SK-N-SH (cell line): ENCODE measurements at regions of chr7 and their contacts with region 1.

Region 1: DNA sequence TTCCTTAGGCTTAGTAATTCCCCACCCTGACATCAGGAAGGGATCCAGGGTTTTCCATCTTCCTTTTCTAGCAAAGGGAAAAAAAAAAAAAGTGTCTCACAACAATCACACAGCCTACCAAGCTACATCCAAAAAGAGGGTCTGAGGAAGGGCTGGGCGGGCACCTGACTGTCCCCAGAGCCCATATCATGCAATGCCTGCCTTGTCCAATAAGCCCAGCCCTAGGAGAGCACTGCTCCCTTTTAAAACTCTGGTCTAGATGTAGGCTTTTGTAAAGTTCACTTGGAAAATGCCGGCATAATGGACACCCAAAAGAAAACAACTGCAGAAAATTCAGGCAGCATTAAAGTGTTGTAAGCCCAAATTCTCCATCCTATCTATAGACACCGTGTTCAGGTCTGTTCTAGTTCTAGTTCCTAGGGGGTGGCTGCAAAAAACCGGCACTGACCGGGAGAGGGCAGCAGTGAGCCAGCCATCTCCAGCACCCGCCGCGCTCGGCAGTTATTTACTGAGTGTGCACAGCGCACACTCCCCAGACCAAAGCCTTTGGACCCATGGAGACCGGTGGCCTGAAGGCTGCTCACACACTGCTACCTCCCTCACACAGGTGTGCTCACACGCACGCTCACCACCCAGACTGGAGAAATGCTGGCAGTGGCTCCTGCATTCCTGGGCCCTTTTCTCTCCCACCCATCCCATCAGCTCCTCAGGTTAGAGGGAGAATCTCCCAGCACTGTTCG is 48.7 kb downstream of the PODXL start:
- DNase-seq: peak; percentile 88
- H3K4me3 ChIP-seq: no peak overlapping the region
- H3K27ac ChIP-seq: peak overlapping the region in 1 of 2 experiments; percentile 29; a peak in 2 of 4 replicates
- H3K4me1 ChIP-seq: peaks cover 9 to 20% of the 10 kb centered on the region in 2 experiments; a peak in 3 of 4 replicates
- H3K27me3 ChIP-seq: no peaks in the 10 kb centered on the region
- CTCF ChIP-seq: peak; percentile 100
- EP300 ChIP-seq: no peak
- RAD21 ChIP-seq: peak; percentile 95

Region 2: DNA sequence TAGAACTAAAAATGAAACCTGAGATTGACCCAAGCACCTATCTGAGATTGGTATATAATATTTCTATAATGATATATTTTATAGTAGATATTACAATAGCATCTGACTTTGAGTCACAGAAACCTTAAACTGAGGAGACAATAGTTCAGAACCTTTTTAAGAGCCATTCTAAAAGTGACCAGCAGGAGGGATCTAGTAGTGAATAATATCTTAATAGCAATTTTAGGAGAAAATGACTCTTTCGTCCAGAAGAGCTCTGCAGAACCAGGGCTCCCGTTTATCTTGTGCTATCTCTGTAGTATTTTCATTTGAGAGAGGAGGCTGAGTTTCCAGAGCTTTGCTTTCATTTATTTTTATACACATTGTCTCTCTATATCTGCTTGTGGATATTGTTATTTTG is 19.4 kb before region 1 on chr7:
- CTCF ChIA-PET with region 1: interaction called, 91 read pairs
- POLR2A ChIA-PET with region 1: interaction called, 5 read pairs
- DNase-seq: no peak
- H3K4me3 ChIP-seq: no peak overlapping the region
- H3K27ac ChIP-seq: peak overlapping the region in 1 of 2 experiments; percentile 2; a peak in 1 of 4 replicates
- H3K4me1 ChIP-seq: peaks cover 0 to 10% of the 10 kb centered on the region in 2 experiments; a peak in 2 of 4 replicates
- H3K27me3 ChIP-seq: no peaks in the 10 kb centered on the region
- CTCF ChIP-seq: peak; percentile 61
- EP300 ChIP-seq: no peak
- RAD21 ChIP-seq: no peak

Region 3: DNA sequence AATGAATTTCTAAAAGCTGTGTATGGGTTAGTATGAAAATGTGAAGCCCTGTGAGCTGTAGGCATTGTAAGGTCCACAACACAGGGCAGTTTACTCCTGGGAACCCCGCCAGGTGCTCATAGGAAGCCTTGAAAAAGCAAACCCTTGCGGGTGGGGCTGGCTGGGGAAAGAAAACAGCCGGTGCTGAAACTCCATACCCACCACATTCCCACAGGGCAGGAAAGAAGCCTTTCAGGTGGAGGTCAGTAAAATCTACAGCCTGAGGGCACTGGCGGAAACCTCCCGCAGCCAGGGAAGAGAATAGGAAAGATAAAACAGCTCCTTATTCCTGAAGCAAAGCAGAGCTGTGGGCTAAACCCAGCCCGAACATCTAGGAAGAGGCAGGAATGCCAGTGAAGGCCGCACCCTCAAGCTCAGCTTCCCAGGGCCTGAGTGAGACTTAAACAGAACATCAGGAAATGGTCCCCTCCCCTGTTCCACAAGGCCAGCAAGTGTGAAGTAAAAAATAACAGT is 13.9 kb after region 1 on chr7:
- CTCF ChIA-PET with region 1: interaction called, 15 read pairs
- POLR2A ChIA-PET with region 1: no interaction called
- DNase-seq: no peak
- H3K4me3 ChIP-seq: no peak overlapping the region
- H3K27ac ChIP-seq: peak overlapping the region in 1 of 2 experiments; percentile 22; a peak in 2 of 4 replicates
- H3K4me1 ChIP-seq: peaks cover 0 to 2% of the 10 kb centered on the region in 2 experiments; a peak in 1 of 4 replicates
- H3K27me3 ChIP-seq: no peaks in the 10 kb centered on the region
- CTCF ChIP-seq: no peak
- EP300 ChIP-seq: no peak
- RAD21 ChIP-seq: no peak

Region 4: DNA sequence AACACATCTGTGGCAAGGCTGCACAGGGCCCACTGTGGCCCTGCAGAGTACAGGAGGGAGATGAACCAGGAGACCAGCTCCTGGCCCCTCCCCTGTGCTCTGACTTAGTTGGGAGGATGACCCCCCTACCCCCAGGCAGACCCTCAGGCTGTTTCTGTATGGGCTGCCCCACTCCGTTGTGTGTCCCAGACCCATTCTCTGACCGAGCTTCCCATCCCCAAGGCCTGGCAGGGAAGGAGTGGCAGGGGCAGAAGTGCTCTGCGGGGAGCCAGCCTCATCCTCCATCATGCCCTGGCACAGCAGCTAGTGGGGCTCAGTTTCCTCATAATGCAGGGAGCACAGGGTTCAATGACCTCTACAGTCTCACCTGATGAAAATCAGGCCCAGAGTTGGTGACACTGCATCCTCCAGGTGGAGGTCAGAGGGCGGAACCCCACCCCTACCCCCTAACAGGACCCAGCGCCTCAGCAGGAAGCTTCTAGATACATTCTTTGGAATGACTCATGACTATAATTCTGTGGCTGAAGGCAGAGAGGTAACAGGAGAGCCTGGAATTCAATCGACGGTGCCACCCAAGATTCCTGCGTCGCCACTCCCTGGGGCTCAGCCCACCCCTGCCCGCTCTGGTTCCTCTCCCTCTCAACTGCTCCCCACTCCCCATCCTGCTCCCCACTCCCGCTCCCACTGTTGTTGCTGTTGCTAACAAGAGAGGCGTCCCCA is 30.5 kb after region 1 on chr7:
- CTCF ChIA-PET with region 1: interaction called, 95 read pairs
- POLR2A ChIA-PET with region 1: no interaction called
- DNase-seq: no peak
- H3K4me3 ChIP-seq: no peak overlapping the region
- H3K27ac ChIP-seq: peak overlapping the region; percentile 64 to 76
- H3K4me1 ChIP-seq: peaks cover 27 to 34% of the 10 kb centered on the region in 2 experiments; a peak in 3 of 4 replicates
- H3K27me3 ChIP-seq: no peaks in the 10 kb centered on the region
- CTCF ChIP-seq: no peak
- EP300 ChIP-seq: peak in 1 of 2 experiments; percentile 66; a peak in 1 of 4 replicates
- RAD21 ChIP-seq: no peak